ENCODE measurements at regions of chr17 and their contacts with region 1.

Region 1: GRCh38 chr17:32349854-32350665 is at the start of gene ZNF207:
- DNase-seq: peak; percentile 96 to 97
- H3K4me3 ChIP-seq: peak within 1 kb of the TSS; percentile 92
- H3K4me1 ChIP-seq: peaks cover 13% of the 10 kb centered on the region
- H3K27me3 ChIP-seq: no peaks in the 10 kb centered on the region

Region 2: DNA sequence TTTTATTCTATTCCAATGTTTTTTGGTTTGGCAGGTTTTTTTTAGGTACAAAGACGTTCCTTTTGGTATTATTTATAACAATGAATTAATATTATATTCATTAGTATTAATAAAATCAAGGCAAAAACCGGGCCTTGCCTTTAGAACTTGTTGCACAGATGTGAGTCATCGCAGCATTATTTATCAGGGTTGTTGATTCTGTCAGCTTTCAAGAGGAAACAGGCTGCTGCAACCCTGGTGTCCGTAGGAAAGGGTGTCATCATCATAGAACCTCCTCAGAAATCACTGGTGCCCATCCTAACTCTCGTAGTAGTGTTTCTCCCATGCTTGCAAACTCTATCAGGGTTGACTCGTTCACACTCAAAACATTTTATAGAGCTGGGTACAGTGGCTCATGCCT is 353.1 kb before region 1 on chr17:
- in situ Hi-C with region 1: loop called (anchors 25 kb)
- DNase-seq: no peak
- H3K4me3 ChIP-seq: no peak overlapping the region
- H3K4me1 ChIP-seq: no peaks in the 10 kb centered on the region
- H3K27me3 ChIP-seq: no peaks in the 10 kb centered on the region